ENCODE measurements at regions of chr5 and their contacts with region 1.

Region 1: DNA sequence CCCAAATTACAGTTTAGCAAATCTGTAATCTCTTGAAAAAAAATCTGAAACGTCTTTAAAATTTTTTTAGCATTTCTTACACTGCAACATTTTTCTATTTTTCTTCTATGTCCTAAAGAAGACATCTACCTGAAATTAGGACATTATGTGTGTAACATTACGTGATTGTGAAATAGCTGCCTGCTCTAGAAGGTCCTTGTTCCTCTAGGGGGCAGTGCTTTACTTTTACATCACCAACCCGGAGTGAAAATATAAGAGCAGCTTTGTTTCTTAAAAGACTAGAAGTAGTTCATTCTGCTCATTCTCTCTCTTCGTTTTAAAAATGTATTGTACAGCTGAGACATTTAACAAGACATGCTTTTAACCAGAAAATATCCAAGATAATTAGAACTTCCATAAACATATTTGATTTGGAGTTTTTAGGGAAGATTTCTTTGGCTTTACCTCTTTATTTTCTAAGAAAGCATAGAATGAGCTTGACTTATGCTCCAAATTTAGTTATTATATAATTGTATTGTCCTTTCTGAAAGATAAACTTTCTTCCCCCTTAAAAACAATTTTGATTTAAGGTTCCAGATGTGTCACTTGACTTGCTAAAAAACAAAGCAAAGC is 48.1 kb upstream of the RIOK2 start:
- DNase-seq: peak; percentile 31
- CTCF ChIP-seq: peak; percentile 74

Region 2: DNA sequence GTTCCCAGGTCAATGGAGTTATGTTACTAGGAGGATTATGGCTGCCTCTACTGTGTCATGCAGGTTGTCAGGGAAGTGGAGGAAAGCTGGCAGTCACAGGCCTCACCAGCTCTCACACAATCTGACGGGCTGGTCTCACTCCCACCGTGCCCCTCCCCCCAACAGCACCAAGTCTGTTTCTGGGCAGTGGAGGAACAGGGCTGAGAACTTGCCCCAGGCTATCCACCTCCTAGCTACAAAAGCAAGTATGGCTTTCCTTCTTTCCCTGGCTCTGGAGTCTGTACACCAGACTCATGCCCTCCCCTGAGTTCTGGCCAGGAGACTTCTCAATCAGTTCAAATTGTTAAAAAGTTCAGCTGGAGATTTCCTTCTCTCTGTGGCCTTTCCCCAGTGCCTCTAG is 22.4 kb before region 1 on chr5:
- CTCF ChIA-PET with region 1: interaction called, 10 read pairs
- POLR2A ChIA-PET with region 1: no interaction called
- DNase-seq: no peak
- CTCF ChIP-seq: no peak

Region 3: GRCh38 chr5:97243353-97243752 is 12.2 kb after region 1 on chr5:
- CTCF ChIA-PET with region 1: interaction called, 11 read pairs
- POLR2A ChIA-PET with region 1: no interaction called
- DNase-seq: no peak
- CTCF ChIP-seq: no peak

Region 4: DNA sequence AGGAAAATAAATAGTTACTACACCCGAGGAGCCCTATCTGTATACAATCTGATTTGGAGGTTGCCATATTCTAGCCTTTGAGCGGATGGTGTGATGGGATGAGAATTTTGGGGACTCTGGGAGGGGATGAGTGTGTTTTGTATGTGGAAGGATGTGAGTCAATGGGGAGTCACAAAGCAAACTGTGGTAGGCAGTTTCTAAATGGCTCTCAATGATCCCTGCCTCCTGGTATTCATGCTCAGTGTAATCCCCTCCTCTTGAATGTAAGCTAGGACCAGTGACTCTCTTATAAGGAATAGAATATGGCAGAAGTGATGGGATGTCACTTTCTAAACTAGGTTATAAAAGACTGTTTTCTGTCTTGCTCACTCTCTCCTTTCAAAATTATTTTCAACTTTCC is 157.7 kb after region 1 on chr5:
- CTCF ChIA-PET with region 1: no interaction called
- POLR2A ChIA-PET with region 1: no interaction called
- DNase-seq: no peak
- CTCF ChIP-seq: no peak

Region 5: GRCh38 chr5:97676608-97677007 is 445.5 kb after region 1 on chr5:
- CTCF ChIA-PET with region 1: no interaction called
- POLR2A ChIA-PET with region 1: no interaction called
- DNase-seq: no peak
- CTCF ChIP-seq: no peak

Region 6: DNA sequence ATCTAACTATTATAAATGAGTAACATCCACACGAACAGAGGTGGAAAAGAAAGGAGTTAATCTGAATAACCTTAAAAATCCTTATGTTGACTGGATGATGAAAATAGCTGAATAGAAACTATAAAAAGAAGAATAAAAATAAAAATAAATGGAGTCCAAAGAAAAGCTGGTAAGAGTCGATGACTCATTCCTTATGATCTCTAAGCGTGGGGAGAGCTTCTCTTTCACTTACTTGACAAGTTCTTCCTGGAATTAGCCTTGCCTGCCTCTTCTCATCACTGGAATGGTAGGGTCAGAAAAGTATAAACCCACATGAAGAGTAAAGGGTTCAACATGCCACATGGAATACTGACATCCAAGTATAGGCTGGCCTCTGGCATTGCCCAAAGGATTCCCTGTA is 1065.3 kb after region 1 on chr5:
- CTCF ChIA-PET with region 1: no interaction called
- POLR2A ChIA-PET with region 1: no interaction called
- DNase-seq: no peak
- CTCF ChIP-seq: no peak